ENCODE measurements at regions of chr11 and their contacts with region 1.

Region 1: GRCh38 chr11:2400069-2400760 is at the start of gene TSSC4:
- DNase-seq: peak; percentile 99
- H3K4me3 ChIP-seq: peak within 1 kb of the TSS; percentile 82
- H3K27ac ChIP-seq: peak within 1 kb of the TSS; percentile 85
- H3K4me1 ChIP-seq: peaks cover 8% of the 10 kb centered on the region
- H3K27me3 ChIP-seq: no peaks in the 10 kb centered on the region
- CTCF ChIP-seq: peak; percentile 98
- total RNA-seq, gene TSSC4: 41.3 and 46.8 TPM in 2 replicates

Region 2: GRCh38 chr11:2305140-2305840 is 94.9 kb before region 1 on chr11:
- CTCF ChIA-PET with region 1: interaction called, 11 read pairs
- POLR2A ChIA-PET with region 1: no interaction called
- intact Hi-C with region 1: no loop called
- DNase-seq: peak; percentile 63
- H3K4me3 ChIP-seq: no peak overlapping the region
- H3K27ac ChIP-seq: no peak overlapping the region
- H3K4me1 ChIP-seq: peaks cover 6% of the 10 kb centered on the region
- H3K27me3 ChIP-seq: no peaks in the 10 kb centered on the region
- CTCF ChIP-seq: peak; percentile 83

Region 3: GRCh38 chr11:2325719-2326118 is 74.5 kb before region 1 on chr11:
- CTCF ChIA-PET with region 1: no interaction called
- POLR2A ChIA-PET with region 1: no interaction called
- intact Hi-C with region 1: no loop called
- DNase-seq: no peak
- H3K4me3 ChIP-seq: no peak overlapping the region
- H3K27ac ChIP-seq: no peak overlapping the region
- H3K4me1 ChIP-seq: no peaks in the 10 kb centered on the region
- H3K27me3 ChIP-seq: no peaks in the 10 kb centered on the region
- CTCF ChIP-seq: no peak

Region 4: GRCh38 chr11:2377511-2378443 is 22.4 kb before region 1 on chr11:
- CTCF ChIA-PET with region 1: interaction called, 7 read pairs
- POLR2A ChIA-PET with region 1: no interaction called
- intact Hi-C with region 1: loop called (anchors 1 kb)
- DNase-seq: peak; percentile 55
- H3K4me3 ChIP-seq: peak overlapping the region; percentile 91
- H3K27ac ChIP-seq: peak overlapping the region; percentile 90
- H3K4me1 ChIP-seq: peaks cover 6% of the 10 kb centered on the region
- H3K27me3 ChIP-seq: no peaks in the 10 kb centered on the region
- CTCF ChIP-seq: no peak

Region 5: DNA sequence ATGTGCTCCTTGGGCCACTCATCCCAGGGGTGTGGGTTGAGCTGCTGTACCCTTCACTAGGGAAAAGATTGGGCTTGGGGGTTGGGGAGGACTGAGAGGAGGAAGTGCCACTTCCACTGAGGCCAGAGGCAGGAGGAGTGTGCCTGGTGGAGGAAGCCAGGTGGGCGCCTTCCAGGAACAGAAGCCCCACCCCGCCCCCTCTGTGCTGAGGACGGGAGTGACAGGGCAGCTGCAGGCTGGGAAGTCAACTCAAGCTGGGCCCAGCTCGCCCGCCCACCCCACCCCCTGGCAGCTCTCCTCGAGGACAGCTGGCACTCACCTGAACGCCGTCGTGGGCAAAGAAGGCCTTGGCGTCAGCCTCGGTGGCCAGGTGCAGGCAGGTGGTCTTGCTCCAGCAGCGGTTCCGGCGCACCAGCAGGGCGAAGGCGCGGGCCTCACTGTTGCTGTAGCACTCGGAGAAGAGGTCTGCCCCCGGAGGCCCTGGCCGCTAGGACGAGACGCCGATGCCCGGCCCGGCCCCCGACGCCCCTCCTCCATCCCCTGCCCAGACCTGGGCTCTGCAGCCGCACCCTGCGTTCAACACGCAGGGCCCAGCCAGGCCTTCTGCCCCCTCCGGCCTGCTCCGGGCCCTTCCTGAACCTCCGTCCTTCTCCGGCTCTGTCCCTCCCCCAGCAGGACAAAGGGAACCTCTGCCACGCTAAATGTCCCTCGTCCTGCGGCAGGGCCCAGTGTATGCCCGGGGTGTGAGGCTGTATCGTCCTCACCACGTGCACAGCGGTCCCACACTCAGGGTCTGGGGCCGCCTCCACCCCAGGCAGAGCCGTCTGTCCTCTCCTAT is 13.7 kb after region 1 on chr11:
- CTCF ChIA-PET with region 1: no interaction called
- POLR2A ChIA-PET with region 1: interaction called, 10 read pairs
- intact Hi-C with region 1: no loop called
- DNase-seq: no peak
- H3K4me3 ChIP-seq: no peak overlapping the region
- H3K27ac ChIP-seq: no peak overlapping the region
- H3K4me1 ChIP-seq: no peaks in the 10 kb centered on the region
- H3K27me3 ChIP-seq: no peaks in the 10 kb centered on the region
- CTCF ChIP-seq: no peak

Measured in A673 (cell line).